OCI-LY7 (cell line): ENCODE measurements at regions of chr11 and their contacts with region 1.

Region 1: DNA sequence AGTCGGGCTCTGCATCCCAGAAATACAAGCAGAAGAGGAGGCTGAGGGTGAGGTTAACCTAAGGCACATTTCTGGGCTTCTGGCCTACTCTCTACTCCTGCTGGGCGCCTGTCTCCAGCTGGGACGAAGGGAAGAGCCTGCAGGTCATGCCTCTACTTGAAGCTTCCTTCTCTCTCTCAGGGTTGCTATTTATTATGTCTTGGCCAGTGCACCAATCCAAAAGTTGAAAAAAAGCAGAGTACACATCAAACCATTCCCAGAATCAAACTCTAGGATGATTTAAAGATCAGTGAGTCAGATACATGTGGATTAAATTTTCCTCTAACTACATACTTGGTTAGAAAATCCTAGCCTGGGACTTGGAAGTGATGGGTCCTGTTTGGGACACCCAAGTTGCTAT is 60.2 kb upstream of the CDON start:
- DNase-seq: no peak
- H3K4me3 ChIP-seq: no peak overlapping the region
- H3K27ac ChIP-seq: no peak overlapping the region
- H3K4me1 ChIP-seq: no peaks in the 10 kb centered on the region
- CTCF ChIP-seq: no peak

Region 2: DNA sequence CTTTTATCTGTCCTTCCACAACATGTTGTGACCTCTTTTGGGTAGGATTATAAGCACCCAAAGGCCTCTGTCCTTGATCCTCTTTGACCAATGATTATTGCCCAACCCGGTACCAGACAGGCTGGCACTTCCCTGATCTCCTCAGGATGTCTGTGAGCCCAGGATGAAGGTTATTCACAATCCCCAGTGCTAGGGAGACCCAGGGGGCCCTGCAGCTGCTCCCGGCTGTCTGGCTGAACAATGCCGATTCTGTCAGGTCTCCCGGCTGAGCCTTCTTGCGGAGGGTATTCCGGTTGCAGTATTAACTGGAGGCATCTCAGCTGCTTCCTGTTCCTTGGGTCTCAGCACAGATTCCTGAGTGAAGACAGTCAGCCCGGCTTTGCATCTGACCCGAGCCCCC is 11.0 kb after region 1 on chr11:
- CTCF ChIA-PET with region 1: no interaction called
- POLR2A ChIA-PET with region 1: interaction called, 14 read pairs
- intact Hi-C with region 1: no loop called
- DNase-seq: no peak
- H3K4me3 ChIP-seq: no peak overlapping the region
- H3K27ac ChIP-seq: no peak overlapping the region
- H3K4me1 ChIP-seq: no peaks in the 10 kb centered on the region
- CTCF ChIP-seq: no peak

Region 3: DNA sequence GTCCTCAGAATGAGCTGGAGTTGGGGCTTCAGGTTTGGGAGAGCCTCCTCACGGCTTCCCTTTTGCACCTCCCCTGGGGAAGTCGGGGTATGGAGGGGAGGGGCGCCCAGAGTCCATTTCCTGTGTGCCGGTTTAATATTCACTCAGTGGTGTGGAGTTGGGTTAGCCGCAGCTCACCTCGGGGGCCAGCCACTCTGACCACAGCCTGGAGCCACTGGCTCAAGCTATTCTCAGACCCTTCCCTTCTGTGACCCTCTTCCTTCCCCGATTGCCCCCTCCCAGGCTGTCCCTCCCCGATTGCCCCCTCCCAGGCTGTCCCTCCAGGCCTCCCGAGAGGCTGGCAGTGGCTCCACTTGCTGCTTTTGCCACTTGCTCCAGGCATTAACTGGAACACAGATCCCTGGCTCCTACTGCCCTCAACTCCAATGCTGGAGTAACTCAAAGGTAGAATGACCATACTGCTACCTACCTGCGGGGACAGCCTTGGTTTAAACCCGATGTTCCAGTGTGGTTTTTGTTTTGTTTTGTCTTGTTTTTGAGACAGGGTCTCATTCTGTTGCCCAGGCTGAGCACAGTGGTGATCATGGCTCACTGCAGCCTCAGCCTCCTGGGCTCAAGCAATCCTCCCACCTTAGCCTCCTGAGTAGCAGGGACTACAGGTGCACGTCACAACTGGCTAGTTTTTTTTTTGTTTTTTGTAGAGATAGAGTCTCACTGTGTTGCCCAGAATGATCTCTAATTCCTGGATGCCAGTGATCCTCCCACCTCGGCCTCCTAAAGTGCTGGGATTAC is 59.3 kb after region 1 on chr11:
- CTCF ChIA-PET with region 1: no interaction called
- POLR2A ChIA-PET with region 1: no interaction called
- intact Hi-C with region 1: no loop called
- DNase-seq: no peak
- H3K4me3 ChIP-seq: no peak overlapping the region
- H3K27ac ChIP-seq: no peak overlapping the region
- H3K4me1 ChIP-seq: no peaks in the 10 kb centered on the region
- CTCF ChIP-seq: no peak

Region 4: GRCh38 chr11:126711977-126712625 is 589.2 kb after region 1 on chr11:
- CTCF ChIA-PET with region 1: no interaction called
- POLR2A ChIA-PET with region 1: no interaction called
- intact Hi-C with region 1: no loop called
- DNase-seq: no peak
- H3K4me3 ChIP-seq: no peak overlapping the region
- H3K27ac ChIP-seq: no peak overlapping the region
- H3K4me1 ChIP-seq: no peaks in the 10 kb centered on the region
- CTCF ChIP-seq: no peak